Activated B cell treated with CpG ODN at 0.5 μM for 24 hours (primary cell): ENCODE measurements at regions of chr2 and their contacts with region 1.

Region 1: GRCh38 chr2:149017116-149017985 is 21.1 kb upstream of the LYPD6B start:
- DNase-seq: peak; percentile 41
- ATAC-seq: peak; percentile 39
- H3K4me3 Mint-ChIP-seq: no peak overlapping the region
- H3K27ac Mint-ChIP-seq: no peak overlapping the region
- H3K4me1 Mint-ChIP-seq: peaks cover 44% of the 10 kb centered on the region
- H3K27me3 Mint-ChIP-seq: no peaks in the 10 kb centered on the region
- CTCF ChIP-seq: peak; percentile 66

Region 2: GRCh38 chr2:147619808-147620207 is 1397.5 kb before region 1 on chr2:
- CTCF ChIA-PET with region 1: no interaction called
- POLR2A ChIA-PET with region 1: interaction called, 13 read pairs
- intact Hi-C with region 1: no loop called
- DNase-seq: no peak
- ATAC-seq: no peak
- H3K4me3 Mint-ChIP-seq: no peak overlapping the region
- H3K27ac Mint-ChIP-seq: no peak overlapping the region
- H3K4me1 Mint-ChIP-seq: peaks cover 9% of the 10 kb centered on the region
- H3K27me3 Mint-ChIP-seq: peaks cover 3% of the 10 kb centered on the region
- CTCF ChIP-seq: no peak

Region 3: DNA sequence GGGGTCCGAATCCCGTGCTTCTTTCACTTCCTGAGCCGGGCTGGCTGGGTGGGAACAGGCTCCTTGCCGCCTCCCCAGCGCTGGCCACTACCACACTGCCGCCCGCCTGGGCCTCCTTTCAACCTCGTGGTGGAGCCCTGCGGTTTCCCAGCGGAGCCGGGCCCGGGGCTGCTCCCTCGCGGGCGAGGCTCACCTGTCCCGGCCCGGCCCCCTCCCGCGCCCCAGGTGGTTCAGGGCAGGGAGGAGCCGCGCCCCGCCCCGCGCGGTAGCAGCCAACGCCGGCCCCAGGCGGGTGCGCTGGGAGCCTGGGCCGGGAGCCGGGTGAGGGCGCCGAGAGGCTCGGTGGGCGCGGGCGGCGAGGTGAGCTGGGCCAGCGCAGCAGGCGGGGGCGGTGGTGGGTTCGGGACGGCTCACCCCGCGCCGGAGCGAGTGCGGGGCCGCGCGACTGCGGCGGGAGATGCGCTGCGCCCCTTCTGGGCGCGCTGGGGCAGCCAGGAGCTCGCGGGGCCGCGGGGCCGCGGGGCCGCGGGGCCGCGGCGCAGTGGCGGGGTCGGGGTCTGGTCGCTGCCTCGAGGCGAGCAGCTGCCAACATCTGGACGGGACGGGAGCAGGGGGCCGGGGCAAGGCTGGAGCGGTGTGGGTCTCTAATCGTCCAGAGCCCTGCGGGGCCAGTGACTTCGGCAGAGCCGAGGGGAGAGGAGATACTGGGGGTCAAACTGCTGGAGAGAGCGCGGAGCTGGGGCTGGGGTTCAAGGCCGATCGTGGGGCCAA is 21.3 kb after region 1 on chr2 and contains the start of gene LYPD6B:
- CTCF ChIA-PET with region 1: interaction called, 7 read pairs
- POLR2A ChIA-PET with region 1: interaction called, 3 read pairs
- intact Hi-C with region 1: loop called (anchors 1 kb)
- DNase-seq: no peak
- ATAC-seq: peak; percentile 71
- H3K4me3 Mint-ChIP-seq: peak within 1 kb of the TSS; percentile 81
- H3K27ac Mint-ChIP-seq: no peak within 1 kb of the TSS
- H3K4me1 Mint-ChIP-seq: peaks cover 28% of the 10 kb centered on the region
- H3K27me3 Mint-ChIP-seq: peaks cover 9% of the 10 kb centered on the region
- CTCF ChIP-seq: no peak
- total RNA-seq, gene LYPD6B: 0.58 and 1.4 TPM in 2 replicates

Region 4: DNA sequence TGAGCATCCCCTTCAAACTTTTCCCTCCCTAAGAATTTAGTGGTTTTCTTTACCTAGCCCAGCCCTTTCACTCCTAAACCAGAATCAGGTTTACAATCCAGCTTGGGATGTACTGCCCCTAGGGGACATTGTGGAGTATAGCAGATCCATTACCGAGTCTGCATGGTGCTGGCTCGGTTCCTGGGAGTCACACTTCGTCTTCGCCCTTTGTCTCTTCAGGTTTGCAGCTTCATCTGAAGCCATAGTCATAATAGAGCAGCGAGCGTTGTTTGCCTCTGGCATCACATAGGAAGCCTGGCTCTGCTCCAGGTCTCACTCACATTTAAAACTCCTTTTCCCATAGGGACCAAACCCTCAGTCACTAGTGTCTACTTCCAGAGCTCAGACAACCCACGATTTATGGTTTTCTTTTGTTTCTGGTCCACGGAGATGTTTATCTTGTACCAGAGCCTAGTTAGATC is 296.2 kb after region 1 on chr2:
- CTCF ChIA-PET with region 1: interaction called, 40 read pairs
- POLR2A ChIA-PET with region 1: no interaction called
- intact Hi-C with region 1: loop called (anchors 1 kb)
- DNase-seq: no peak
- ATAC-seq: peak; percentile 78
- H3K4me3 Mint-ChIP-seq: no peak overlapping the region
- H3K27ac Mint-ChIP-seq: no peak overlapping the region
- H3K4me1 Mint-ChIP-seq: peaks cover 4% of the 10 kb centered on the region
- H3K27me3 Mint-ChIP-seq: peaks cover 13% of the 10 kb centered on the region
- CTCF ChIP-seq: no peak

Region 5: DNA sequence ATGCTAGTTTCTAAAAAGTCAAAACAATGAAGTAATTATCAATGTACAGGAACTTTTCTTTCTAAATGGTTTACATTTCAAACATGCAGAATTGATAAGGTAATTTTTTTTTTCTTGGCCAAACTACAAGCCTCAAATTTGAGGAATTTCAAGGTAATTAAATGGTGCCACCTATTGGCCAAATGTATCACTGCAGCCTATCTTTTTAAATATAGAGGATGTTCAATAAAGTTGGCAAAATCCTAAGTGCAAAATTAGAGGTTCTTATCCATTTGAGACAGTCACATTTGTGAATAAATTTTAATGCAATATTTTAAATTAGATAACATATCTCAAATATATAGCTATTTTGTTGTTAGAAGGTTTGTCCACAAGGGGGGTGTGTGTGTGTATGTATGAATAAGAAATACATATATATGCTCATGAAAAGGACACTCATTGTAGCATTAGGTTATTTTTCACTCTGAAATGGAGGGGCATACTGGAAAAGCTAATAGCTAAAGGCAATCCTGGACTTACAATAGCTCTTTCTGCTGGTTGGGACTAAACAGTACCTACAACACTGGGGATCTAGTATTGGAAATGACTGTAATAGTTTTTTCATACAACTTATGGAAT is 544.1 kb after region 1 on chr2:
- CTCF ChIA-PET with region 1: interaction called, 107 read pairs
- POLR2A ChIA-PET with region 1: no interaction called
- intact Hi-C with region 1: loop called (anchors 1 kb)
- DNase-seq: no peak
- ATAC-seq: peak; percentile 31
- H3K4me3 Mint-ChIP-seq: no peak overlapping the region
- H3K27ac Mint-ChIP-seq: no peak overlapping the region
- H3K4me1 Mint-ChIP-seq: peaks cover 8% of the 10 kb centered on the region
- H3K27me3 Mint-ChIP-seq: no peaks in the 10 kb centered on the region
- CTCF ChIP-seq: peak; percentile 100